Motor neuron (in vitro differentiated cells): ENCODE measurements at regions of chr12 and their contacts with region 1.

Region 1: DNA sequence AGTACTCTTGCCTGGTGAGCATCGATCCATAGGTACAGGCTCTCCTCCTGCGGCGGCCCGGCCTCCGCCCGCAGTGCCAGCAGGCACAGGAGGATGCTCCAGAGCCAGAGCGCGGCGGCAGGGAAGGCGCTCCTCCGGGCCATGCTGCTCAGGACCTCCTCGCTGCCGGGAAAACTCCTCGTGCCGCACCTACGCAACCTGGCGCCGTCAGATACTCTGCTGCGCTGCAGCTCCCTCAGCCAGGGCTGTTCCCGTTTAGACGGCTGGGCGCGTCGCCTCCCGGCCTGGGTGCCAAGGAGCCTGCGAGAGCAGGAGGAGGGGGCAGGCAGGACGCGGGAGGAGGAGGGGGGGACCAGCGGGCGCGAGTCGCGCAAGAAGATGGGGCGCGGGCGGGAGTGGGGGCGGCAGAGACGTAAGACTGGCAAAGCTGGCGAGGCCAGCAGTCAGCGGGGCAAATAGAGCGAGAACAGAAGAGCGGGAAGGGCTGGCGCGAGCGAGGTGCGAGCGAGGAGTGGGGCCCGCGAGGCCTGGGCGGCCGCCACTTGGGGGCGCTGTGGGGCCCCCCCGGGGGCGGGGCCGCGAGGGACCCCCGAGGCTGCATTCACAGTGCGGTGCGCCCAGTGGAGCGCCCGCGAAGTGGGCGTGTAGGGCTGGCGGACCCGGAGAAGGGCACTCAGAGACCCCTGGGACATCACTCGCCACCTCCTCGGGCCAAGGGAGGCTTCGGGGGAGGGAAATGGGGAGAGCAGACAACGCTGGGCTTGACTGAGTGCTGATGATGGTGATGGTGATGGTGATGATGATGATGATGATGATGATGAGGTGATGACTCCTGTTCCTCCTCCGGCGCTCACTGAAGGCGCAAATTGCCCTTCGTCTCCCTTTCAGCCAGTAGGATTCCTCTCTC is at the start of gene WIF1:
- ATAC-seq: peak; percentile 45 to 91 (median 84)
- H3K4me3 ChIP-seq: peak within 1 kb of the TSS; percentile 33 to 43 (median 36)
- H3K27ac ChIP-seq: no peak within 1 kb of the TSS
- H3K4me1 ChIP-seq: no peaks in the 10 kb centered on the region
- total RNA-seq, gene WIF1: 0.19 to 0.50 (median 0.36) TPM in 5 of 8 experiments, not detected in the others

Region 2: DNA sequence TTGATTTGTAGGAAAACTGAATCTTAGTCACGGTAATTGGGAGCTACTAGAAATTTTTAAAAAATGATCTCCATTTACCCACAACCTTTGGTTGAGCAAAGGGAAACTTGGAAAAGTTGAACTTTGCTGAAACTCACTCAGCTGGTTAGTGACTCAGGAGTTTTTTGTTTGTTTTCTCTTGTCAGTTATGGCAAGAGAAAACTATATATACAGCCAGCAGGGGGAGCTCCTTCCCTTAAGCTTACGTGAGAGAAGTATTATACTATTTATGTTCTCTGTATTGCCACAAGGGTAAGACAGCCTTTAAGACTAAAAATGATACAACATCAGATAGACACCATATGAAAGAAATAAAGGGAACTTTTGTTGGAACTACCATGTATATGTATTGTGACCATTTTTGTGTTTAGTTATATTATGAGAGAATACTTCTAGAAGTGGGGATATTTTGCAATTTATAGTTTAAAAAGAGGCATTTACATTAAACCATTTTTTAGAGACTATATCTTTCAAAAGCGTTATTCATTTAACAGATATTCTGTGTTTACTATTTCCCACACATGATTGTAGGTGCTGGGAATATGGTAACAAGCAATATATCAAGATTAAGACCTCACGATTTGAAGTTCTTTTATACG is 325.0 kb before region 1 on chr12:
- in situ Hi-C with region 1: loop called in 1 of 9 experiments (anchors 25 kb)
- ATAC-seq: peak; percentile 36 to 97 (median 64)
- H3K4me3 ChIP-seq: no peak overlapping the region
- H3K27ac ChIP-seq: no peak overlapping the region
- H3K4me1 ChIP-seq: no peaks in the 10 kb centered on the region

Region 3: DNA sequence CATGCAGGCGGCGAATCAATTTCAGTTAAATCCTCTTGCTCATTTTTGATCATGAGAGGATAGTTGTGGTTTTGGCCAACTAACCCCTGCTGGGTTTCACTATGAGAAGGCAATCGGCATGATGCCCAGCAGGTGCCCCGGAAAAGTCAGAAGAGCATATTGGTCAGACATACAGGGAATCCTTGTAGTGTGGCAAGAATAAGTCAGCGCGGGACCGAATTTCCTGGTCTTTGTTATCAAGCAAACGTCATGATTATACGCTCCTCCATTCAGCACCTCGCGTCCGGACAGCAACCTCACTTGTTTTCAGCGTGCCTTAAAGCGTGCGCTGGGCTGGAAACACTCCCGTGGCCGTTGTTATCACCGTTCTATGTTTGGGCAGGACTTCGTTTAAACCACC is 295.1 kb before region 1 on chr12:
- in situ Hi-C with region 1: no loop called
- ATAC-seq: peak in 6 of 8 experiments; percentile 6 to 69 (median 20)
- H3K4me3 ChIP-seq: peak overlapping the region; percentile 45 to 78 (median 55)
- H3K27ac ChIP-seq: peak overlapping the region in 1 of 2 donors; percentile 68
- H3K4me1 ChIP-seq: peaks cover 4 to 8% of the 10 kb centered on the region in 2 donors

Region 4: GRCh38 chr12:64890873-64891468 is 230.3 kb before region 1 on chr12:
- in situ Hi-C with region 1: loop called in 3 of 9 experiments (anchors 25 kb)
- ATAC-seq: peak; percentile 48 to 72 (median 58)
- H3K4me3 ChIP-seq: no peak overlapping the region
- H3K27ac ChIP-seq: no peak overlapping the region
- H3K4me1 ChIP-seq: no peaks in the 10 kb centered on the region

Region 5: DNA sequence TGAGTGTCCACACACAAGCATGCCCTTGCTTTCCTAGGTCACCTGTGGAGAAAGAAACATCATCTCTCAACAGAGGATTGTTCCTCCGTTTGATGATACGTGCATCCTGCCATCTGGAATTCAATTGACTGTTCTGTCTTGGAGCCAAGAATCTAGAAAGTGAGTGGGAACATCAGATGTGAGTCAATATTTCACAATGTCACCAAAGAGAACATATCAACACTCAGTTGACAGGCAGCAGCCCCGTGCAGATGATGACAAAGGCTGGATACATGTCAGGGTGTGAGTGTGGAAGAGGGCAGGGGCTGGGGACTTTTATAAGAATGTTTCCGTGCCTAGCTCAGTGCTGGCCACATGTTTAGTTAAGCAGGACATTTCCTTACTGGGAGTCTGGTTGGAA is 220.8 kb before region 1 on chr12:
- in situ Hi-C with region 1: loop called in 4 of 9 experiments (anchors 25 kb)
- ATAC-seq: peak in 1 of 8 experiments; percentile 46
- H3K4me3 ChIP-seq: no peak overlapping the region
- H3K27ac ChIP-seq: no peak overlapping the region
- H3K4me1 ChIP-seq: no peaks in the 10 kb centered on the region

Region 6: GRCh38 chr12:65022960-65023359 is 98.3 kb before region 1 on chr12:
- in situ Hi-C with region 1: no loop called
- ATAC-seq: no peak
- H3K4me3 ChIP-seq: no peak overlapping the region
- H3K27ac ChIP-seq: no peak overlapping the region
- H3K4me1 ChIP-seq: peaks cover 0 to 12% of the 10 kb centered on the region in 2 donors